ENCODE measurements at regions of chr10 and their contacts with region 1.

Region 1: GRCh38 chr10:3203016-3203811 is 30.6 kb upstream of the PITRM1 start:
- DNase-seq: no peak
- ATAC-seq: no peak
- H3K4me3 Mint-ChIP-seq: no peak overlapping the region
- H3K27ac Mint-ChIP-seq: no peak overlapping the region
- H3K4me1 Mint-ChIP-seq: peaks cover 32% of the 10 kb centered on the region
- H3K27me3 Mint-ChIP-seq: peaks cover 89% of the 10 kb centered on the region

Region 2: GRCh38 chr10:3192856-3193635 is 10.2 kb before region 1 on chr10:
- CTCF ChIA-PET with region 1: interaction called, 11 read pairs
- DNase-seq: peak; percentile 66
- ATAC-seq: no peak
- H3K4me3 Mint-ChIP-seq: no peak overlapping the region
- H3K27ac Mint-ChIP-seq: no peak overlapping the region
- H3K4me1 Mint-ChIP-seq: peaks cover 11% of the 10 kb centered on the region
- H3K27me3 Mint-ChIP-seq: peaks cover 81% of the 10 kb centered on the region

Region 3: DNA sequence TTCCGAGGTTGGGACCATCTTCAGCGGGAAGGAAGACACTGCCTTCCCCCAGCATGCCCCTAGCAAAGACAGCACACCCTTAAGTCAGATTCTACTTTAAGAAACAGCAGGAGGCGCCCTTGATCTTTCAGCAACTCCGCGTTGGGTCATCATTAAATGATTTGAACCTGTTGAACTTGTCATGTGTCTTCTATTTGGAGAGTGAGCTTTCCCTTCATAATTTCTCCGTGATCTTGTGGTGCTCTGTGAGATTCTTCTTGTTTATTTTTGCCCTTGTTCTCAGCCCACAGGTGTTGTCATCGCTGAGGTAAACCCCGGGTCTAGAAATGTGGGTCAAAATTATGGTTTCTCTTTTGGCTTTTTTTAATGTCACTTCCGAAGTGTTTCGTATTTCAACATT is 18.9 kb after region 1 on chr10:
- CTCF ChIA-PET with region 1: no interaction called
- DNase-seq: no peak
- ATAC-seq: no peak
- H3K4me3 Mint-ChIP-seq: no peak overlapping the region
- H3K27ac Mint-ChIP-seq: no peak overlapping the region
- H3K4me1 Mint-ChIP-seq: peaks cover 8% of the 10 kb centered on the region
- H3K27me3 Mint-ChIP-seq: peaks cover 20% of the 10 kb centered on the region

Region 4: DNA sequence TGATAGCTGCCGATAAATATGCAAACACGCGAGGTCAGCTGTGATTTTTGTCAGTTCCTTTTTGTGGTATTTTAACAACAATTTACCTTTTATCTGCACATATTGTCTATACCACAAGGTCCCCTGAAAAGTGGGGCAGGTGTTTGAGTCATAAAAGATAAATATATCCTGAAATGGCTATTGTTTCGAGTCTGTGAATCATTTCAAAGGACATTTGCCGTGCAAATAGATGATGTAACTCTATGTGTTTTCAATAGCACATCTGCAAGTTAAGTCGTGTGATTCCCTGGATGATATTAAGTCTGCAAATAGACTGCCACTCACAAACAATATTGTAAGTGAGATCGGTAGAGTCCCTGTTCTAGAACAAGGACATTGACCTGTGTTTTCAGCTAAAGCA is 162.4 kb after region 1 on chr10:
- CTCF ChIA-PET with region 1: no interaction called
- DNase-seq: no peak
- ATAC-seq: no peak
- H3K4me3 Mint-ChIP-seq: no peak overlapping the region
- H3K27ac Mint-ChIP-seq: no peak overlapping the region
- H3K4me1 Mint-ChIP-seq: no peaks in the 10 kb centered on the region
- H3K27me3 Mint-ChIP-seq: no peaks in the 10 kb centered on the region